Right ventricle myocardium superior (tissue), 1 donor: ENCODE measurements at regions of chr1 and their contacts with region 1.

Region 1: DNA sequence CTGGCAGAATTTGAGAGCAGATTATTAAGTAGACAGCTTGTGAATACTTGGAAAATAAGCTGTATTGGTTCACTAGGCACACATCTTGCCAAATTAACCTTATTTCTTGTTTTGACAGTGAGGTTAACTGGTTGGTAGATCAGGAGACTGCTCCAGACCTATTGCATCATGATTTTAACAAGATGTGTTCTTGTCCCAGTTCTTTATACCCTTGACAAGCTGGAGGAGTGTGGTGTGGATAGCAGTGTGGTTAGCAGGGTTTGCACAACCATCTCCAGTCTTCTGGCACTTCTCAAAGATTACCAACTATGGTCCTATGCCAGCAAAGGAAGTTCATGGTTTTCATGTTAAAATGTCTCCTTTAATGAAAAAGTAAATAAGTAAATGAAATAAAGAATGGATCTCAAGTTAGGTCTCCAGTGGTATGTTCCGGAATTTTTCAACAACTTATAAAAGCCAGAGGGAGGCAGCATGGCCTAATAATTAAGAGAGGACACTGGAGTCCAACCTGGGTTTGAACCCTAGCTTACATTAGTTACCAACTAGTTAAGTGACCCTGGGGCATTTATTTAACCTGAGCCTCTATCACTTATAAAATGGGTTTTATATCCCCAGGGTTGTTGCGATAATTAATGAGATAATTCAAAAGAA is 34.1 kb downstream of the DDX20 start:
- DNase-seq: no peak
- ATAC-seq: peak; percentile 71

Region 2: DNA sequence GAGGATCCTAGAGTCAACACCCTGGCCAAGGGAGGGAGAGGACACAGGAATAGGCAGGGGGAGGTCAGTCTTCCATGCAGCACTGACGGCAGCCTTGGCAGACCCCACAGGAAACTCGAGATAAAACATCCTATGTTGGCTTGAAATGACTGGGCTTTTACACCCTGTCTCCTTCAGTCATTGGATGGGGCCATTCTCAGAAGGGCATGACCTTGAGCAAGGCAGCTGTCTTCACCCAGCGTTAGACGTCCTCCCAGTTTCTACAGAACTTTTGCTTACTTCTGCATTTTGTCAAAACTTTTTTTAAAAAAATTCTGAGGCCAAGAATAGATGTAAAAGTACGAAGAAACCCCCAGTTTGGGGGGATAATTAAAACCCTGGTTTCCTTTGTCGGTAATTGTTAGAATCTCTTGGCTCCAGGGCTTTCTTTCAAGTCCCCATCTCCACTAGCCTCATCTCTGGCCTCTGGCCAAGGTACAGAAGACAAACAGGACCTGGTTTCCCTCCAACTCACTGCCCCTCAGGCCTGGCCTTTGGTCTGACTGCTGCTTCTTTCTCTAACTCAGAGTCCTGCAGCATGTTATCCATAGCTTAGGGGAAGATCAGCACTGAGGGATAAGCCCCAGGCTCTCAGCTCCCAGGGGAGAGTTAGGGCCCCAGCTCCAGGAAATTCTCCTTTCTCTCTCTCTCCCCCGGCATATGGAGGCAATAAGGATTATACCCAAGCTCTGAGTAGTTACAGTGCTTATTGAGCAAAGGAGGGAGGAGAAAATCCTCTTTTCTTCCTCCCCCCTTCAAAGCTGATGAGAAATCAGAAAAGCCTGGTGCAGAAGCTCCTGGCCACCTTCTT is 251.3 kb after region 1 on chr1:
- intact Hi-C with region 1: no loop called
- DNase-seq: no peak
- ATAC-seq: no peak

Region 3: DNA sequence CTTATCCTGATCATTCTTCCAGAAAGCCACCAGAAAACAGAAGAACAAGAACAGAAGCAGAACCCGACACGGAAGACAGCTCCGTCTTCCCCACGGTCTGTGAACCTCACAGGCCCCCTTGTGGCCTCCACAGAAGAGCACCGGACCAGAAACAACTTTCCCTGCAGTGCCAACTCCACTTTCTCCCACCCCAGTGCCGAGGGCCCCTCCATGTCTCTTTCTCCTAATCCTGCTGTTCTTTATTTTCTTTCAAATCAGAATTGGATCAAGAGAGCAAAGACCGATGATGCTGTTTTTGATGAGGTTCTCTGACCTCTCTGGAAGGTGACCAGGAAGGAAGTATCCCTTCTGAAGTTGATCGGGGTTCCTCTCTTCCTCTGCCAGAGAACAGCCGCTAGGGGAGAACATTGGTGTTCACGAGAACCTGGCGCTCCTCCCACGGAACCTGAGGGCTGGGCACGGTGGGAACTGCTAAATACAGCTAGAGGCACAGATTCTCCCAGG is 547.3 kb after region 1 on chr1:
- intact Hi-C with region 1: loop called (anchors 10 kb)
- DNase-seq: peak; percentile 63
- ATAC-seq: peak; percentile 94

Region 4: GRCh38 chr1:112369392-112370285 is 579.8 kb after region 1 on chr1:
- intact Hi-C with region 1: loop called (anchors 10 kb)
- DNase-seq: peak; percentile 94
- ATAC-seq: peak; percentile 99